Mammary epithelial cell (primary cell): ENCODE measurements at regions of chr6 and their contacts with region 1.

Region 1: GRCh38 chr6:47188588-47189021 is 121.1 kb downstream of the TNFRSF21 start:
- DNase-seq: peak; percentile 99
- H3K4me3 ChIP-seq: no peak overlapping the region
- H3K27ac ChIP-seq: peak overlapping the region; percentile 64
- H3K4me1 ChIP-seq: peaks cover 29% of the 10 kb centered on the region
- H3K27me3 ChIP-seq: no peaks in the 10 kb centered on the region
- CTCF ChIP-seq: peak in 1 of 2 donors; percentile 11

Region 2: DNA sequence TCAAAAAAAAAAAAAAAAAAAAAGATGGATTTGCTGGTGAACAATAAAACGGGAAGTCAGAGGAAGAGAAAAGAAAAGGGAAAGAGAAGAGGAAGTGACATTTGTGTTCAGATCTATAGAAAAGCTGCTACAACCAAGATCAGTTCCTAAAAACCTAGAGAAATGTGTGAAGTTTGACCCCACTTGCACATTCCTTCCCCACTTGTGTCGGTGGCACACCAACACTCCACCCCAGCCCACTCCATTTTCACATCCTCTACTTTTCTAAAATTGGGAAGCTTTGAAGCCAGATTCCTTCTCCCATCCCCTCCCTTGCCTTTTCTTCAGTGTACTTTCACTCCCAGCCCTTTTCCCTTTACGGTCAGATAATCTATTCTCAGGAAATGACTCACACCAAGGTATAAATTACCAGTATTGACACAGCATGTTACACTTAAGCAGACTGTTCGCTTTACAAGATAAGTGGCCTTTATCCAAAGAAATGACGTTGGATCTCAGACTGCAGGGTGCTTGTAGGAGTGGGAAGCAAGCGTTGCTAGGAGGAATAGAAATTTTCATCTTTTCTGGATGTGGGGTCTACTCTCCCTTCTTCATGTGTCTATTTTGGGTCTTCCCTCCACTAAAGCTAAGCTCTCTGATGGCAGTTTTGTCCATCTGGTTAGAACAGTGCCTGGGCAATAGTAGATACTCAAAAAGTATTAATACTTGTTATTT is 54.0 kb before region 1 on chr6:
- CTCF ChIA-PET with region 1: no interaction called
- dilution Hi-C with region 1: no loop called
- in situ Hi-C with region 1: no loop called
- intact Hi-C with region 1: loop called (anchors 1 kb)
- DNase-seq: peak; percentile 94
- H3K4me3 ChIP-seq: peak overlapping the region in 1 of 3 experiments; percentile 18
- H3K27ac ChIP-seq: peak overlapping the region; percentile 98
- H3K4me1 ChIP-seq: peaks cover 29% of the 10 kb centered on the region
- H3K27me3 ChIP-seq: no peaks in the 10 kb centered on the region
- CTCF ChIP-seq: no peak

Region 3: GRCh38 chr6:47168183-47168582 is 20.4 kb before region 1 on chr6:
- CTCF ChIA-PET with region 1: no interaction called
- dilution Hi-C with region 1: no loop called
- in situ Hi-C with region 1: no loop called
- intact Hi-C with region 1: loop called (anchors 1 kb)
- DNase-seq: peak; percentile 99
- H3K4me3 ChIP-seq: no peak overlapping the region
- H3K27ac ChIP-seq: peak overlapping the region; percentile 84
- H3K4me1 ChIP-seq: peaks cover 57% of the 10 kb centered on the region
- H3K27me3 ChIP-seq: no peaks in the 10 kb centered on the region
- CTCF ChIP-seq: no peak

Region 4: DNA sequence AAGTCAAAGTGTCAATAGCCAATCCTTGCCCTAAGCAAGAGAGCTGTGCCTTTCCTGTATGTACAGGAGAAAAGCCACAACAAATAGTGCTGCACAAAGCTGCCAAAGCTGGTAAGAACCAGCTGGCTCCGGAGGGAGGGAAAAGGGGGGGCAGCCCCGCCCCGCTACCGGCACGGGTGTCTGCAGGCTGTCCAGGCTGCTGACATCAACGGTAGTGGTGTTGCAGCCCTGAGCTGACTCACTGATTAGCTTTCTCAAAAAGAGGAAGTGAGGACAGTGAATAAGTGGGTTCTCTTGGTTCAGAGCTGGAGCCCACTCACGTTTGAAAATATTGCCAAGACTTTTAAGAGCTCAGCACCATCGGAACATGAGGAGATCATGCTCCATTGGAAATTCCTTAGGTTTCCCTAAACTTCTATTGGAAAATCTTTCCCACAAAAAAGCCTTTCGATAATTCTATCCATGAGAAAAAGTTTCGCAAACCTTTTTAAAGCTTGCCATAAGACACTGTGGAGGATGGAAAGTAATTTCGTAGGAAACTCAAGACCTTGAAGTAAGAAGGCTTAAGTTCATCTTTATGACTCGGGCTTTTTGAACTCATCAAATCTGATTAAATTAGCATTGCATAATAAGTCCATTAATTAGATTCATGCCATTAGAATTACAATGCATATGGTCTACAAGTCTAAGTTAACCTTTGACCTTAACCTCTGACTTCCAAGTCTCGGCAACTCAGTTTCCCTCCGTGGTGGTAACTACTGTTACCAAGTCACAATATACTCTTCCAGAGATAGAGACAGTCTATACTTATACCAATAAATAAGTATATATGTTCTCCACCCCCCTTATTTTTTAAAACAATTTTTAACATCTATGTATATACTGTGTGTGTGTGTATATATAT is 54.1 kb after region 1 on chr6:
- CTCF ChIA-PET with region 1: no interaction called
- dilution Hi-C with region 1: no loop called
- in situ Hi-C with region 1: no loop called
- intact Hi-C with region 1: loop called (anchors 5 kb)
- DNase-seq: peak; percentile 93
- H3K4me3 ChIP-seq: no peak overlapping the region
- H3K27ac ChIP-seq: peak overlapping the region; percentile 62
- H3K4me1 ChIP-seq: peaks cover 20% of the 10 kb centered on the region
- H3K27me3 ChIP-seq: no peaks in the 10 kb centered on the region
- CTCF ChIP-seq: no peak